Panc1 (cell line): ENCODE measurements at regions of chr5 and their contacts with region 1.

Region 1: GRCh38 chr5:83069096-83069799 is 7.9 kb downstream of the TMEM167A start:
- DNase-seq: no peak
- ATAC-seq: no peak
- H3K4me3 ChIP-seq: no peak overlapping the region
- H3K27ac ChIP-seq: no peak overlapping the region
- H3K4me1 ChIP-seq: peaks cover 3% of the 10 kb centered on the region; the same call in 1 of the 2 replicates
- H3K27me3 ChIP-seq: no peaks in the 10 kb centered on the region
- CTCF ChIP-seq: no peak

Region 2: GRCh38 chr5:82364497-82364896 is 704.8 kb before region 1 on chr5:
- CTCF ChIA-PET with region 1: no interaction called
- POLR2A ChIA-PET with region 1: no interaction called
- in situ Hi-C with region 1: no loop called
- intact Hi-C with region 1: loop called (anchors 10 kb)
- DNase-seq: no peak
- ATAC-seq: 0 out of 2 replicates have a peak, but pooled peaks have one; percentile 56
- H3K4me3 ChIP-seq: no peak overlapping the region
- H3K27ac ChIP-seq: no peak overlapping the region
- H3K4me1 ChIP-seq: no peaks in the 10 kb centered on the region
- H3K27me3 ChIP-seq: peaks cover 2% of the 10 kb centered on the region; the same call in 1 of the 2 replicates
- CTCF ChIP-seq: peak; percentile 41

Region 3: GRCh38 chr5:83441747-83442146 is 372.5 kb after region 1 on chr5:
- CTCF ChIA-PET with region 1: no interaction called
- POLR2A ChIA-PET with region 1: no interaction called
- in situ Hi-C with region 1: no loop called
- intact Hi-C with region 1: loop called (anchors 10 kb)
- DNase-seq: no peak
- ATAC-seq: no peak
- H3K4me3 ChIP-seq: no peak overlapping the region
- H3K27ac ChIP-seq: no peak overlapping the region
- H3K4me1 ChIP-seq: no peaks in the 10 kb centered on the region
- H3K27me3 ChIP-seq: no peaks in the 10 kb centered on the region
- CTCF ChIP-seq: no peak